ENCODE measurements at regions of chr12 and their contacts with region 1.

Region 1: DNA sequence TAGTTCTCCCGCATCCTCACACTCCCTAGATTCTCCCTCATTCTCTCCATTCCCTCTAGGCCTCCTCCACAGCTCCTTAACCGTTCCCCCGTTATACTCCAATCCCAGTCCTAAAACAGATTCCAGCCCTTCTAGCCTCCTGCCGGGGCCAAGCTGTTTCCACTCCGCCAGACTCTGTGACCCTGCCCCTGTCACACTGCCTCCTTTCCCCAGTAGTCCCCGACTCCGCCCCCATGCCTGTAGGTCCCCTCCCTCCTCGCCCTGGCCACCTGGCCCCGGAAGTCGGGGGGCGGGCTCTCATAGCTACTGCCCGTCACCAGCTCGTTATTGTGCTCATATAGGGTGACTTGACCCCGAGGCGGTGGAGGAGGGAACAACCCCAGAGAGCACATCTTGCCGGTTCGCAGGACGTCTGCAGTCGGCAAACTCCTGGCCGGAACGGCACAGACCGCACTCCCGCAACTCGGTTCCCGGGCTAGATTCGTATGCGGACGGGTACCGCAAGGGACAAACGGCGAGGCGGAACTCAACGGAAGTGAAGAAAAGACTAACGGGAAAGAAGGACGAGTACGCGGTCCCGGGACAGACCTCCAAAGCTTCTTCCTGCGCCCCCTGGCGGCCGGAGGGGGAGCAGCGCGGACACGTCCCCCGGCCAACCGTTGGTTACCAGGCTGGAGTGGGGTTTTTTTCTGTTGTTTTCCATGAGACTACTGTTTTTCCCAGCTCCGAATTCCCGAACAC is at the start of gene AAAS:
- DNase-seq: peak; percentile 98
- ATAC-seq: peak; percentile 86
- H3K4me3 Mint-ChIP-seq: peak within 1 kb of the TSS; percentile 87
- H3K27ac Mint-ChIP-seq: peak within 1 kb of the TSS; percentile 95
- H3K4me1 Mint-ChIP-seq: peaks cover 39% of the 10 kb centered on the region
- H3K27me3 Mint-ChIP-seq: no peaks in the 10 kb centered on the region
- total RNA-seq, gene AAAS: 65.5 to 72.5 TPM

Region 2: DNA sequence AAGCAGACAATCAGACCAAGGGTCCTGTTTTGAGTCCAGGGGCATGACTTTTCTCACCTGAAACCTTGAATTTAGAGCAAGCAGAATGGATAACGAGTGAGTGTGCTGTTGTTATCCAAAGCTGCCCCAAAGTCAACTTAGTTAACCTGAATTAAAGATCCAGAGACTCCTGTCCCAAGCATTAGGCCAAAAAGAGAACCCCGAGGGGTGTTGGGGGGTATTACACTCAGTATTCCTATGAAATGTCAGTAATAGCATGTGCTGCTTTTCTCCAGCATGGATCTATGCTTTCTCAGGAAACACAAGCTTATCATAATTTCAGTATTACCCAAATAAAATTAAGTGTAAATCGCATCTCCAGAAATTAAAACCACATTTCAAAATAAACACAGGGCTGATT is 296.0 kb before region 1 on chr12:
- CTCF ChIA-PET with region 1: no interaction called
- POLR2A ChIA-PET with region 1: no interaction called
- intact Hi-C with region 1: no loop called
- DNase-seq: no peak
- ATAC-seq: no peak
- H3K4me3 Mint-ChIP-seq: no peak overlapping the region
- H3K27ac Mint-ChIP-seq: no peak overlapping the region
- H3K4me1 Mint-ChIP-seq: no peaks in the 10 kb centered on the region
- H3K27me3 Mint-ChIP-seq: no peaks in the 10 kb centered on the region

Region 3: GRCh38 chr12:53079226-53080117 is 241.8 kb before region 1 on chr12 and contains the start of gene SPRYD3:
- CTCF ChIA-PET with region 1: interaction called, 5 read pairs
- POLR2A ChIA-PET with region 1: interaction called, 6 read pairs
- intact Hi-C with region 1: loop called in 1 of 2 experiments (anchors 1 kb)
- DNase-seq: peak; percentile 98
- ATAC-seq: peak; percentile 98
- H3K4me3 Mint-ChIP-seq: peak within 1 kb of the TSS; percentile 80
- H3K27ac Mint-ChIP-seq: peak within 1 kb of the TSS; percentile 74
- H3K4me1 Mint-ChIP-seq: peaks cover 33% of the 10 kb centered on the region
- H3K27me3 Mint-ChIP-seq: no peaks in the 10 kb centered on the region
- total RNA-seq, gene SPRYD3: 13.7 to 18.2 TPM

Region 4: GRCh38 chr12:53205747-53206419 is 115.4 kb before region 1 on chr12:
- CTCF ChIA-PET with region 1: interaction called, 37 read pairs
- POLR2A ChIA-PET with region 1: interaction called, 5 read pairs
- intact Hi-C with region 1: loop called in 1 of 2 experiments (anchors 10 kb)
- DNase-seq: peak; percentile 89
- ATAC-seq: peak; percentile 78
- H3K4me3 Mint-ChIP-seq: peak overlapping the region; percentile 77
- H3K27ac Mint-ChIP-seq: peak overlapping the region; percentile 87
- H3K4me1 Mint-ChIP-seq: peaks cover 74% of the 10 kb centered on the region
- H3K27me3 Mint-ChIP-seq: no peaks in the 10 kb centered on the region

Region 5: GRCh38 chr12:53267999-53268647 is 53.1 kb before region 1 on chr12 and contains the start of gene ESPL1:
- CTCF ChIA-PET with region 1: interaction called, 29 read pairs
- POLR2A ChIA-PET with region 1: interaction called, 3 read pairs
- intact Hi-C with region 1: loop called (anchors 1 kb)
- DNase-seq: peak; percentile 93
- ATAC-seq: peak; percentile 86
- H3K4me3 Mint-ChIP-seq: peak within 1 kb of the TSS; percentile 92
- H3K27ac Mint-ChIP-seq: peak within 1 kb of the TSS; percentile 98
- H3K4me1 Mint-ChIP-seq: peaks cover 30% of the 10 kb centered on the region
- H3K27me3 Mint-ChIP-seq: no peaks in the 10 kb centered on the region
- total RNA-seq, gene ESPL1: 60.8 to 66.9 TPM

Region 6: GRCh38 chr12:53379389-53380103 is 58.3 kb after region 1 on chr12:
- CTCF ChIA-PET with region 1: interaction called, 12 read pairs
- POLR2A ChIA-PET with region 1: interaction called, 22 read pairs
- intact Hi-C with region 1: loop called (anchors 1 kb)
- DNase-seq: peak; percentile 96
- ATAC-seq: peak; percentile 82
- H3K4me3 Mint-ChIP-seq: no peak overlapping the region
- H3K27ac Mint-ChIP-seq: no peak overlapping the region
- H3K4me1 Mint-ChIP-seq: peaks cover 39% of the 10 kb centered on the region
- H3K27me3 Mint-ChIP-seq: no peaks in the 10 kb centered on the region

Region 7: GRCh38 chr12:53500776-53501614 is 179.8 kb after region 1 on chr12 and contains the start of gene TARBP2:
- CTCF ChIA-PET with region 1: interaction called, 18 read pairs
- POLR2A ChIA-PET with region 1: interaction called, 12 read pairs
- intact Hi-C with region 1: loop called (anchors 1 kb)
- DNase-seq: peak; percentile 98
- ATAC-seq: peak; percentile 84
- H3K4me3 Mint-ChIP-seq: peak within 1 kb of the TSS; percentile 81
- H3K27ac Mint-ChIP-seq: peak within 1 kb of the TSS; percentile 98
- H3K4me1 Mint-ChIP-seq: peaks cover 31% of the 10 kb centered on the region
- H3K27me3 Mint-ChIP-seq: no peaks in the 10 kb centered on the region
- total RNA-seq, gene TARBP2: 28.3 to 30.2 TPM

Region 8: GRCh38 chr12:53727310-53728041 is 406.2 kb after region 1 on chr12 and contains the start of gene CALCOCO1:
- CTCF ChIA-PET with region 1: interaction called, 3 read pairs
- POLR2A ChIA-PET with region 1: no interaction called
- intact Hi-C with region 1: loop called in 1 of 2 experiments (anchors 1 kb)
- DNase-seq: peak; percentile 99
- ATAC-seq: peak; percentile 99
- H3K4me3 Mint-ChIP-seq: peak within 1 kb of the TSS; percentile 80
- H3K27ac Mint-ChIP-seq: peak within 1 kb of the TSS; percentile 73
- H3K4me1 Mint-ChIP-seq: peaks cover 20% of the 10 kb centered on the region
- H3K27me3 Mint-ChIP-seq: no peaks in the 10 kb centered on the region
- total RNA-seq, gene CALCOCO1: 17.1 to 20.4 TPM

Measured in activated CD4-positive, alpha-beta T cell treated with anti-CD3 and anti-CD28 coated beads for 36 hours (primary cell).